ENCODE measurements at regions of chr15 and their contacts with region 1.

Region 1: GRCh38 chr15:70679919-70680231 is 83.5 kb downstream of the UACA start:
- DNase-seq: no peak
- H3K4me3 ChIP-seq: no peak overlapping the region
- H3K27ac ChIP-seq: peak overlapping the region in 2 of 8 donors; percentile 14 to 26
- H3K4me1 ChIP-seq: peaks cover 0 to 16% (median 9%) of the 10 kb centered on the region in 6 donors
- H3K27me3 ChIP-seq: peaks cover 0 to 7% (median 0%) of the 10 kb centered on the region in 7 donors
- CTCF ChIP-seq: peak in 1 of 11 experiments; percentile 0
- POLR2A ChIP-seq: no peak

Region 2: GRCh38 chr15:70810916-70811578 is 131.2 kb after region 1 on chr15:
- intact Hi-C with region 1: loop called (anchors 5 kb)
- DNase-seq: peak; percentile 79
- H3K4me3 ChIP-seq: no peak overlapping the region
- H3K27ac ChIP-seq: peak overlapping the region in 7 of 8 donors; percentile 29 to 68 (median 57)
- H3K4me1 ChIP-seq: peaks cover 13 to 48% (median 26%) of the 10 kb centered on the region in 6 donors
- H3K27me3 ChIP-seq: peaks cover 0 to 9% (median 0%) of the 10 kb centered on the region in 7 donors
- CTCF ChIP-seq: no peak
- POLR2A ChIP-seq: no peak